ENCODE measurements at regions of chr6 and their contacts with region 1.

Region 1: GRCh38 chr6:162602759-162603158 is 124.8 kb downstream of the PRKN start:
- DNase-seq: peak in 2 of 5 donors; percentile 13 to 39
- ATAC-seq: peak in 2 of 4 donors; percentile 53 to 60
- H3K4me3 ChIP-seq: no peak overlapping the region
- H3K27ac ChIP-seq: no peak overlapping the region
- H3K4me1 ChIP-seq: peaks cover 0 to 6% (median 0%) of the 10 kb centered on the region in 12 donors
- H3K27me3 ChIP-seq: no peaks in the 10 kb centered on the region
- CTCF ChIP-seq: no peak
- POLR2A ChIP-seq: no peak

Region 2: DNA sequence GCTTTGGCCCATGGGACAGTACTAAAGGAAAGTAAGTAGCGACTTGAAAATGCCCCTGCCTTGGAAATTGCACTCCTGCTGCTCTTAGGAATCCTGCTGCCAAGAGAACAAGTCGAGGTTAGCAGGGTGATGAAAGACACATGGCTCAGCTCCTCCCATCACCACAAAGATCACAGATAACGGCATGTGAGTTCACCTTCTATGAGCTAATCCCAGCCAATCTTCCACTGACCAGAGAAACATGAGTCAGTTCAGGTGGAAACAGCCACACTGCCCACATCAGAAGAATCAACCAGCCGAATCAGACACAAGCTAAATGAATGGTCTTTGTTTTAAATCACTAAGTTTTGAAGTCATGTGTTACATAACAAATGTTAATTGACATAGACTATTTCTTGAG is 18.5 kb after region 1 on chr6:
- intact Hi-C with region 1: loop called in 1 of 10 experiments (anchors 2 kb)
- DNase-seq: peak in 1 of 5 donors; percentile 31
- ATAC-seq: peak in 2 of 4 donors; percentile 71 to 73
- H3K4me3 ChIP-seq: no peak overlapping the region
- H3K27ac ChIP-seq: no peak overlapping the region
- H3K4me1 ChIP-seq: peaks cover 0 to 10% (median 0%) of the 10 kb centered on the region in 12 donors
- H3K27me3 ChIP-seq: no peaks in the 10 kb centered on the region
- CTCF ChIP-seq: no peak
- POLR2A ChIP-seq: no peak

Measured in heart left ventricle (tissue), 16 donors.